GM12878 (cell line): ENCODE measurements at regions of chr16 and their contacts with region 1.

Region 1: DNA sequence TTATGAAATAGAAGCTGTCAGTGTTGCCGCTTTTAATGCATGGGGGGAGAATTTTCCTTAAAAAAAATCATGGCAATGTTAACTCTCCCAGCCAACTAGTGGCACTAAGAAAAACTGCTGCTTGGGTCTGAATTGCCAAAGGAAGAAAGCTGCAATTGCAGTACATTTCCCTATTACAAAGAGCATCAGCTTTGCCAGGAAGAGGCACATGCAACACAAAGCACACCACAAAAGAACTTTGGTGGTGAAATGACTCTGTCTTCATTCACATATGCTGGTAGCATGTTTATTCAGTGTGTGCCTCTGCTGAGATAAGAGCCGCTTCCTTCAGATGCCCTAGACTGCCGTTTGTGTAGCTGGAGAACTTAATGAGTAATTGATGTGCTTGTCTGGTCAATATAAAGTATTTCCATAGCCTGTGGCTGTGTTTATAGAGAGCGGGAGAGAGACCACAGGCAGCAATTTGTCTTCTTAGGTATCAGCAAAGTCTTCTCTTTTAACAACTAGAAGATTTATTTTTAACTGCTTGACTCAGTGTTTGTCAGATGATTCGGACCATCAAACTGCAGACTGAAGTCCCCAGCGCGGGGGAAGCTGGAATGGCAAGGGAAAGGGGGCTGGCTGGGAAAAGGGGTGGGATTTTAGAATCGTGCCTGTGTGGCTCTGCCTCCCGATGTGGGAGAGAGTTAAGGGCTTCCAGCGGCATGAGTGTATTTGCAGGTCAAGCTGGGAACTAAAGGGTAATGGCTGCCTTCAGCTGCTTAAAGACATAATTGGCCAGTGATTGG is 115.1 kb downstream of the MRTFB start:
- DNase-seq: no peak
- ATAC-seq: no peak
- H3K4me3 ChIP-seq: no peak overlapping the region
- H3K27ac ChIP-seq: no peak overlapping the region
- H3K4me1 ChIP-seq: no peaks in the 10 kb centered on the region
- H3K27me3 ChIP-seq: no peaks in the 10 kb centered on the region
- CTCF ChIP-seq: 0 out of 6 replicates have a peak, but pooled peaks of 1 of the 3 experiments have one; percentile 13
- EP300 ChIP-seq: no peak
- POLR2A ChIP-seq: no peak
- RAD21 ChIP-seq: no peak

Region 2: GRCh38 chr16:14148569-14148968 is 37.6 kb before region 1 on chr16:
- CTCF ChIA-PET with region 1: no interaction called
- POLR2A ChIA-PET with region 1: no interaction called
- RAD21 ChIA-PET with region 1: no interaction called
- SMC1A ChIA-PET with region 1: interaction called, 10 read pairs
- in situ Hi-C with region 1: no loop called
- intact Hi-C with region 1: no loop called
- DNase-seq: no peak
- ATAC-seq: no peak
- H3K4me3 ChIP-seq: no peak overlapping the region
- H3K27ac ChIP-seq: no peak overlapping the region
- H3K4me1 ChIP-seq: peaks cover 11% of the 10 kb centered on the region
- H3K27me3 ChIP-seq: no peaks in the 10 kb centered on the region
- CTCF ChIP-seq: no peak
- EP300 ChIP-seq: no peak
- POLR2A ChIP-seq: no peak
- RAD21 ChIP-seq: no peak